MCF 10A (cell line): ENCODE measurements at regions of chr1 and their contacts with region 1.

Region 1: GRCh38 chr1:208184088-208184911 is 59.9 kb downstream of the PLXNA2 start:
- DNase-seq: peak; percentile 100
- H3K4me3 Mint-ChIP-seq: peak overlapping the region; percentile 58
- H3K27ac Mint-ChIP-seq: peak overlapping the region; percentile 78
- H3K4me1 Mint-ChIP-seq: peaks cover 61% of the 10 kb centered on the region
- H3K27me3 Mint-ChIP-seq: no peaks in the 10 kb centered on the region
- CTCF ChIP-seq: no peak

Region 2: DNA sequence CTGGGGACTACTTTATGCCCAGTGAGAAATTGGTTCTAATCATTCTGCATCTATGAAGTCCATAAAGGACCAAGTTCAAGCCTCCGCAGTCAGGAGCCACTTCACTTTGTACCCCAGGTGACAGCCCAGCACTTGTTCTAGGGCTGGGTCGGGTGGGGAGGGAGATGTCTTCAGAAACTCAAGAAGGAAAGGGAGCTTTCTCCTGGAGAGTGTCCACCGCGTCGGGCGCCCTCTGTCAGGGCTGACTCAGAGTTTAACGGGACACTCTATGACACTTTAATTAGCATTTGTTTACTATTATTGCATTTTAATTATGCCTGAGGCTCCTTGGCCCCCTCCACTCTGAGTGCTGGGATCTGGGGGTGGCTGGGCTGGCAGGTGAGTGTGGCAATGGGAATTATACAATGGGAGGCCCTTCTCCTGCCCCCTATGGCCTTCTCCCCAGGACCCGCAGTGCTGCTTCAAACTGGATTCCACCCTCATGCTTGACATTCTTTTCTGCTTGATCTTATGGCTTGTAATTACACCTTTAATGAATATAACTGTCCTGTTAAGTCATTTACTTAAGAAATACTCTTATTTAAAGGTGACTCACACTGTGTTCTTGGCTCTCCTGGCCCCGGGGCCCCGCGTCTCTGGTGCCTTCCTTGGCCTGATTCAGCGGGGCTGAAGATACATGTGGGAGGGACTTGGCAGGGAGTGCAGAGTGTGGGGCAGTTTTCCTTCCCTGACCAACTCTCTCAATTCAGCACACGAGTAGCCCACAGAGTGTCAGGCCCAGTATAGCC is 76.7 kb before region 1 on chr1:
- CTCF ChIA-PET with region 1: interaction called, 13 read pairs
- POLR2A ChIA-PET with region 1: interaction called, 5 read pairs
- intact Hi-C with region 1: loop called (anchors 1 kb)
- DNase-seq: peak; percentile 100
- H3K4me3 Mint-ChIP-seq: peak overlapping the region; percentile 28
- H3K27ac Mint-ChIP-seq: peak overlapping the region; percentile 69
- H3K4me1 Mint-ChIP-seq: peaks cover 47% of the 10 kb centered on the region
- H3K27me3 Mint-ChIP-seq: no peaks in the 10 kb centered on the region
- CTCF ChIP-seq: no peak

Region 3: DNA sequence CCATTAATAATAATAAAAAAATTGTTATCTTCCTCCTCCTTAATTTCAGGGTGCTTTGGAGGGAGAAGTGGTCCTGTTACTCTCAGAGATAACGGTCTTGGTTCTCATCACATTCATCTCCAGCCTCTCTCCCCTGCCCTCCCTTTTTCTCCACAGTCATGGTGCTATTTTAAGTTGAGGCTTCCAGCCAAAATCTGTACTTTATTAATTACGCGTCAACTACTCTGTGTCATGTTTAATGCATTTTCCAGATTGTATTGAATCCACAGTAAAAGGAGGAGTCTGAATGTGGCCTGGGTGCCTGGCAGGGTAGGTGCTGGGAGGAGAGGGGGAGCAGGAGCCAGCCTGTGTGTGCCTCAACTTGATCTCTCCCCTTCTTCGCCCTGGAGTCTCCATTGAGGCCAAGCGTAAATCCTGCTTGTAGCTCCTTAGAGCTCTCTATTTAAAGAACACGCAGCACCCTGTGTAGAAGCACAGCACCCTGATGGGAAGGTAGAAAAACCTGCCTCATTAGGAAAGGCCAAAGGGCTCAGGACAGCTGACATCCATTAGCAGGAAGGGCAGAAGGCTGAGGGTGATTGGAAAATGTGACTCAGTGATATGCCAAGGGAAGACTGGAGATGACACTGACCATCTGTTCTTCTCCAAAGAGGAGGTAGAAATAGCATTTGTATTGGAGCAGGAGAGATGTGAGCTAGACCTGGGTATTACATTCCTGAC is 22.5 kb before region 1 on chr1:
- CTCF ChIA-PET with region 1: interaction called, 17 read pairs
- POLR2A ChIA-PET with region 1: interaction called, 24 read pairs
- intact Hi-C with region 1: no loop called
- DNase-seq: no peak
- H3K4me3 Mint-ChIP-seq: no peak overlapping the region
- H3K27ac Mint-ChIP-seq: no peak overlapping the region
- H3K4me1 Mint-ChIP-seq: peaks cover 41% of the 10 kb centered on the region
- H3K27me3 Mint-ChIP-seq: no peaks in the 10 kb centered on the region
- CTCF ChIP-seq: no peak

Region 4: GRCh38 chr1:208198236-208198635 is 13.9 kb after region 1 on chr1:
- CTCF ChIA-PET with region 1: interaction called, 14 read pairs
- POLR2A ChIA-PET with region 1: interaction called, 201 read pairs
- intact Hi-C with region 1: loop called (anchors 1 kb)
- DNase-seq: no peak
- H3K4me3 Mint-ChIP-seq: no peak overlapping the region
- H3K27ac Mint-ChIP-seq: peak overlapping the region; percentile 52
- H3K4me1 Mint-ChIP-seq: peaks cover 27% of the 10 kb centered on the region
- H3K27me3 Mint-ChIP-seq: no peaks in the 10 kb centered on the region
- CTCF ChIP-seq: no peak

Region 5: GRCh38 chr1:208219659-208220282 is 35.5 kb after region 1 on chr1:
- CTCF ChIA-PET with region 1: interaction called, 11 read pairs
- POLR2A ChIA-PET with region 1: interaction called, 155 read pairs
- intact Hi-C with region 1: loop called (anchors 1 kb)
- DNase-seq: peak; percentile 98
- H3K4me3 Mint-ChIP-seq: peak overlapping the region; percentile 57
- H3K27ac Mint-ChIP-seq: peak overlapping the region; percentile 97
- H3K4me1 Mint-ChIP-seq: peaks cover 60% of the 10 kb centered on the region
- H3K27me3 Mint-ChIP-seq: no peaks in the 10 kb centered on the region
- CTCF ChIP-seq: no peak

Region 6: DNA sequence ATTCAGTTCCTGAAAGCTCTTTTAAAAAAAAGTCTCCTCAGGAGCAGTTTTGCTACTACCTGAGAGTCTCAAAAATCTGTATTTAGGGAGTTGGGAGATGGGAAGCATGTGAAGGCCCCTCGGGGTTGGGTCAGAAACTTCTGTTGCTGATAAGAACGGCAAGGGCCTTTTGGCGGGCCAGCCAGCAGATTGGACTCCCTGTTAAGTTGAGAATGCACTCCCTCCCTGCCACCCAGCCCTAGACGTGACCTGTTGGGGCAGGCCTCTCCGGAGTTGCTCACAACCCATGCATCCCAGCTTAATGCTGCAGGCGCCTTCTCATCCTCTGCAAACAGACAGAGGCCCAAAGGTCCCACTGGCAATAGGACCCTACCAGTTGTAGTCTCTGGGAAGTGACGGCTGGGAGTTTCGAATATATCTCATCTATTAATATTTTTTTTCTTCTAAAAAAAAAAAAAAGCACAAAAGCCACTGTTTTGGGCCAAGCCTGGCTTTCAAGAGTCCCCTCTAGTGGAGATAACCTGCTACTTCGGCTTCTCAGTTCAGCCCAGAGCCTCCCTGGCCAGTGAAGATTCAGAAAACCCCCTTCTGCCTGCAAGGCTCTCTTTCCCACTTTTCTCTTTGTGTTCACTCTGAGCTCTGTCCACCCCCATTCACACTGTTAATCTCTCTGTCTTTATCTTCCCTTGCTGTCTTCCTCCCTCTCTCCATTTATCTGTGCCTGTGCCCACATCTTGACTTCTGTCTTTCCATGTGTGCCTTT is 54.6 kb after region 1 on chr1:
- CTCF ChIA-PET with region 1: interaction called, 1,037 read pairs
- POLR2A ChIA-PET with region 1: interaction called, 87 read pairs
- intact Hi-C with region 1: loop called (anchors 1 kb)
- DNase-seq: peak; percentile 93
- H3K4me3 Mint-ChIP-seq: no peak overlapping the region
- H3K27ac Mint-ChIP-seq: peak overlapping the region; percentile 81
- H3K4me1 Mint-ChIP-seq: peaks cover 60% of the 10 kb centered on the region
- H3K27me3 Mint-ChIP-seq: no peaks in the 10 kb centered on the region
- CTCF ChIP-seq: peak; percentile 98